AG04449 (cell line): ENCODE measurements at regions of chr7 and their contacts with region 1.

Region 1: DNA sequence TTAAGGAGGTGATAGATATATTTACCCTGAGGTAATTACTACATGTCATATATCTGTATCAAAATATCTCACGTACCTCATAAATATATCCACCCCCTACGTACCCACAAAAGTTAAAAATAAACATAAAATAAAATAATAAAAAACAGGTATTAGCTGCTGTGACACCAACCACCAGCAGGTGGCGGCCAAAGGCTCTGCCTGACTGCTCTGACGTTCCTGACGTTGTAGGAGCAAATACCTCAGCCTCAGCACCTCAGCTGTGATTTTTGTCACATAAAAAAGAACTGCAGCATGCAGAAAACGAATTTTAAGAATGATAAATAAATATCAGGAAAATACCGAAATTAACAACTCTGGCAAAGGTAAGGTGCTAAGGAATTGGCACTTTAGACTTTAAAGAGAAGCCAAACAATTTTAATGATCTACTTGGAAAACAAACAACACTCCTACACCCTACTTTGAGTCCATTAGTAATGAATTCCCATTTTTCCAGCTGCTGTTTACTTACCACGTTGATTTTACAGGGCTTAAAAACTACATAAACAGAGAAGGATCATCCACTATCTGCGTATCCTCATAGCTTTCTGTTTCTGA is 125.4 kb upstream of the TARP start:
- DNase-seq: no peak
- H3K4me3 ChIP-seq: no peak overlapping the region
- CTCF ChIP-seq: peak; percentile 75

Region 2: GRCh38 chr7:38122501-38122900 is 276.3 kb before region 1 on chr7:
- CTCF ChIA-PET with region 1: no interaction called
- POLR2A ChIA-PET with region 1: no interaction called
- DNase-seq: no peak
- H3K4me3 ChIP-seq: no peak overlapping the region
- CTCF ChIP-seq: no peak

Region 3: DNA sequence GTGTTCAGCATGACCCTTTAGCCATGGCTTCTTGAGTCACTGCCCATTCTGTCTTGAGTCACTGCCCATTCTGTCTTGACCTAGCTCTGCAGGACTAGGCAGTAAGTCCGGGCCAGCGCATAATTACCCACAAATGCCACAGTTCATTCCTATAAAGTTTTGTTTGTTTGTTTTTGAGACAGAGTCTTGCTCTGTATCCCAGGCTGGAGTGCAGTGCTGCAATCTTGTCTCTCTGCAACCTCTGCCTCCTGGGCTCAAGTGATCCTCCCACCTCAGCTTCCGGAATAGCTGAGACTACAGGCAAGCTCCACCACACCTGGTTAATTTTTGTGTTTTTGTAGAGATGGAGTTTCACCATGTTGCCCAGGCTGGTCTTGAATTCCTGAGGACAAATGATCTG is 92.7 kb before region 1 on chr7:
- CTCF ChIA-PET with region 1: no interaction called
- POLR2A ChIA-PET with region 1: no interaction called
- DNase-seq: no peak
- H3K4me3 ChIP-seq: no peak overlapping the region
- CTCF ChIP-seq: no peak

Region 4: DNA sequence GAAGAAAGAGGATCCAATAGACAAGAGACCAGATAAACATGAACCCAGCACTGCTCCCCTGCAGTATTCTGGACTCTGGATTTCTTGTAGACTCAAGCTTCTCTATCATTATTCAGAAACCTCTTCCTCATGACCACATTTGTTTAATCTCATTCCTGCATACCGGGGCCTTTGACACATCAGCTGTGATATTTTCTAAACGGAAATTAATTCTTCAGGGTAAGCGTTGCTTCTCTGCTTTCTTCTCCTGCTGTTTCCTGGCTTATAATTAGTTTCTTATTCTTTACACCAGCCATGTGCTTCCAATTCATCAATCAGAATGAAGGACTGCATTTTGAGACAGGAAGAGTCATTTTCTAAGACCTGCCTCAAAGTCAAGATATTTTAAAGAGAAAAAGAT is 71.2 kb before region 1 on chr7:
- CTCF ChIA-PET with region 1: no interaction called
- POLR2A ChIA-PET with region 1: no interaction called
- DNase-seq: no peak
- H3K4me3 ChIP-seq: no peak overlapping the region
- CTCF ChIP-seq: no peak

Region 5: GRCh38 chr7:38382684-38383083 is 16.1 kb before region 1 on chr7:
- CTCF ChIA-PET with region 1: interaction called, 14 read pairs
- POLR2A ChIA-PET with region 1: no interaction called
- DNase-seq: peak; percentile 57
- H3K4me3 ChIP-seq: no peak overlapping the region
- CTCF ChIP-seq: no peak

Region 6: DNA sequence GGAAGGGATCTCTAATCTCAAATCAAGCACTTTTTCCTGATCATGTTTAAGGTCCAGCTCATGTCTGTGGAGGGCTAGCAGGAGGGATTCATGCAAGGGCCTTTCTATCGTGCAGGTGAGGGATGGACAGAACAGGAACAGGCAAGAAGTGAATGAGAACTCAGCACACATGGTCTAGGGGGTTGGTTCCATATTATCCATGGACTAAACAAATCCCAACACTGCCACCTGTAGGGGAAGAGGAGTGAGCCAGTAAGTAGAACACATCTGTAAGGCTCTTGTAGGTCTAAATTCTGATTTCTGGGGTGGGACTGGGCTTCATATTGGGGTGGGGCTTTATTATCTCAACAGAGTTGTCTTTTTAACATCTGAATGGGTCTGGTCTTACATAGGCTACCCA is 12.6 kb after region 1 on chr7:
- CTCF ChIA-PET with region 1: interaction called, 17 read pairs
- POLR2A ChIA-PET with region 1: interaction called, 3 read pairs
- DNase-seq: no peak
- H3K4me3 ChIP-seq: no peak overlapping the region
- CTCF ChIP-seq: peak; percentile 19